ENCODE measurements at regions of chr5 and their contacts with region 1.

Region 1: DNA sequence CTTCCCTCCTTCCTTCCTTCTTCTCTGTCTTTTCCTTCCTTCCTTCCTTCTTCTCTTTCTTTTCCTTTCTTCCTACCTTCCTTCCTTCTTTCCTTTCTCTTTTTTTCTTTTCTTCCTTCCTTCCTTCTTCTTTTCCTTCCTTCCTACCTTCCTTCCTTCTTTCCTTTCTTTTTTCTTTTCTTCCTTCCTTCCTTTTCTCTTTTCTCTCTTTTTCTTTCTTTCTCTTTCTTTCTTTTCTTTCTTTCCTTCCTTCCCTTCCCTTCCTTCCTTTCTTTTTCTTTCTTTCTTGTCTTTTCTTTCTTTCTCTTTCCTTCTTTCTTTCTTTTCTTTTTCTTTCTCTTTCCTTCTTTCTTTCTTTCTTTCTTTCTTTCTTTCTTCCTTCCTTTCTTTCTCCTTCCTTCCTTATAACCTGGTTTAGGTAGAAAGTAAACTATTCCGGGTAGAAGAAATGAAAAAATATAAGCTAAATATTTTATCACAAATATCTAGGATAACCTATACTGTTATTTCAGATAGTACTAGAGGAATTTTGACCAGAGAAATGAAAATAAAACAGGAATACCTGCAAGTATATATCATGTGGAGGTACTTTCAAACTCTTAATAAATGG is 1741.8 kb upstream of the CDH9 start:
- DNase-seq: no peak
- H3K4me3 Mint-ChIP-seq: no peak overlapping the region
- H3K27ac Mint-ChIP-seq: no peak overlapping the region
- H3K4me1 Mint-ChIP-seq: no peaks in the 10 kb centered on the region
- H3K27me3 Mint-ChIP-seq: no peaks in the 10 kb centered on the region
- CTCF ChIP-seq: no peak

Region 2: GRCh38 chr5:28896949-28897348 is 116.8 kb after region 1 on chr5:
- CTCF ChIA-PET with region 1: no interaction called
- intact Hi-C with region 1: loop called (anchors 1 kb)
- DNase-seq: no peak
- H3K4me3 Mint-ChIP-seq: no peak overlapping the region
- H3K27ac Mint-ChIP-seq: no peak overlapping the region
- H3K4me1 Mint-ChIP-seq: no peaks in the 10 kb centered on the region
- H3K27me3 Mint-ChIP-seq: no peaks in the 10 kb centered on the region
- CTCF ChIP-seq: no peak